ENCODE measurements at regions of chr12 and their contacts with region 1.

Region 1: GRCh38 chr12:26832822-26833742 is at the start of gene ITPR2:
- DNase-seq: peak; percentile 96 to 97 (median 96)
- H3K4me3 ChIP-seq: peak within 1 kb of the TSS; percentile 40 to 98 (median 92)
- H3K27ac ChIP-seq: peak within 1 kb of the TSS; percentile 69 to 99 (median 97)
- H3K4me1 ChIP-seq: peaks cover 19 to 39% of the 10 kb centered on the region in 2 donors
- H3K27me3 ChIP-seq: no peaks in the 10 kb centered on the region
- CTCF ChIP-seq: peak in 4 of 6 experiments; percentile 9 to 31 (median 24)
- POLR2A ChIP-seq: peak; percentile 91 to 96
- total RNA-seq, gene ITPR2: 50.8 to 144 (median 74.8) TPM

Region 2: DNA sequence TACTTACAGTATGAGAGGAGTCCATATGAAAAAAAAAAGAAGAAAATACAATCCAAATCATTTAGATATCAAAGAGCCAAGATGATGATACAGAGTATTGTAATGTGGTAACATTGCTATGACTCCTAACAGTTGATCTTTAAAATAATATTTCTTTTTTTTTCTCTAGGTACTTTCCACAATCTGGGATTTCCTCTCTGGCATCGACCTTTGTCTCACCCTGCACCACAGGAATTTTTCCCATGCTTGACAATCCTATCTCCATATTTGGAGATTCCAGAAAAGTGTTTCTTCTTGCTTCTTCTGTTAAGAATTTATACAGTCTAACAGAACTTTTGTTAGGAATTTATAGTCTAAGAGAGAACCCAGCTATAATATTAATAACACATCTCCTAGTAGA is 184.5 kb before region 1 on chr12:
- intact Hi-C with region 1: no loop called
- DNase-seq: no peak
- H3K4me3 ChIP-seq: no peak overlapping the region
- H3K27ac ChIP-seq: no peak overlapping the region
- H3K4me1 ChIP-seq: no peaks in the 10 kb centered on the region
- H3K27me3 ChIP-seq: no peaks in the 10 kb centered on the region
- CTCF ChIP-seq: no peak
- POLR2A ChIP-seq: no peak

Region 3: DNA sequence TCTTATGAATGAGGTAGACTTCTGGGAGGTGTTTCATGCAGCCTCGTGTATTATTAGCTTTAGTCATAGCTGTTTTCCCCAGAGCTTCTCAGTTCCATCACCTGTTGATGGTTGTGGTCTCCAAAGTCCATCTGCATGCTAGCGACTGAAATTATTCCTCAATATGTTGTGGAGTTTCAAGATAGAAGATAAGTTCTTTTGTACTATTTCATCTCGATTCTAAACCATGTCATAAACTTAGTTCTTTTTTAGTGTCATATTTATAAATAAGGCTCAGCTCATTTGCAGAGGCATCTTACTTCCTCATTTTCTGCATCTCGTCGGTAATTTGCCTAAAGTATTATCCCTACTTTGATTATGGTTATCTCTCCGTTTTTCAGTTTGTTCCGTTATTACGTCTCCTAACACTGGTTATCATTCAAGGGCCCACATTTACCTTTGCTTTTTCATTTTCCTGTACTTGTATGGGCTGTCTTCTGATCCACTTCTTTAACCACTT is 119.1 kb before region 1 on chr12:
- intact Hi-C with region 1: loop called in 1 of 2 experiments (anchors 10 kb)
- DNase-seq: no peak
- H3K4me3 ChIP-seq: no peak overlapping the region
- H3K27ac ChIP-seq: no peak overlapping the region
- H3K4me1 ChIP-seq: no peaks in the 10 kb centered on the region
- H3K27me3 ChIP-seq: no peaks in the 10 kb centered on the region
- CTCF ChIP-seq: no peak
- POLR2A ChIP-seq: no peak

Region 4: GRCh38 chr12:26896913-26897312 is 63.8 kb after region 1 on chr12:
- intact Hi-C with region 1: no loop called
- DNase-seq: no peak
- H3K4me3 ChIP-seq: no peak overlapping the region
- H3K27ac ChIP-seq: no peak overlapping the region
- H3K4me1 ChIP-seq: no peaks in the 10 kb centered on the region
- H3K27me3 ChIP-seq: no peaks in the 10 kb centered on the region
- CTCF ChIP-seq: no peak
- POLR2A ChIP-seq: no peak

Region 5: DNA sequence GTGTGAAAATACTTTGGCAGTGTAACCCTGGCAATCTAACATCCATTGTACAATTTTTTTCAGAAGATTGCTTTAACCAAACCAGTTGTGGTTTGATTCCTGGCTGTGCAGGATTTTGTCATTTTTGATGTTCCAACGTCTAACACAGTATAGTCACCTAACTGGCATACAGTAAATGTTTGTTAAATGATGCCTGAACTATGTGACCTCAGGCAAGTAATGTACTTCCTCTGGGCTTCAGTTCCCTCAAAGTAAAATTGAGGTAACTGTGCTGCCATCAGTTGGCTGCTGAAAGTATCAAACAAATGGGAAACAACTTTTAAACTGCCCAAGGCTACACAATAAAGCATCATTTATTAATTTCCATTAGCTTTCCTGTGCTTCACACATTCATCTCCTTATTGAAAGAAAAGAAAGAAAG is 176.8 kb after region 1 on chr12:
- intact Hi-C with region 1: no loop called
- DNase-seq: no peak
- H3K4me3 ChIP-seq: no peak overlapping the region
- H3K27ac ChIP-seq: no peak overlapping the region
- H3K4me1 ChIP-seq: peaks cover 25 to 44% of the 10 kb centered on the region in 2 donors
- H3K27me3 ChIP-seq: no peaks in the 10 kb centered on the region
- CTCF ChIP-seq: no peak
- POLR2A ChIP-seq: no peak

Measured in adrenal gland (tissue), 19 donors.